ENCODE measurements at regions of chr10 and their contacts with region 1.

Region 1: DNA sequence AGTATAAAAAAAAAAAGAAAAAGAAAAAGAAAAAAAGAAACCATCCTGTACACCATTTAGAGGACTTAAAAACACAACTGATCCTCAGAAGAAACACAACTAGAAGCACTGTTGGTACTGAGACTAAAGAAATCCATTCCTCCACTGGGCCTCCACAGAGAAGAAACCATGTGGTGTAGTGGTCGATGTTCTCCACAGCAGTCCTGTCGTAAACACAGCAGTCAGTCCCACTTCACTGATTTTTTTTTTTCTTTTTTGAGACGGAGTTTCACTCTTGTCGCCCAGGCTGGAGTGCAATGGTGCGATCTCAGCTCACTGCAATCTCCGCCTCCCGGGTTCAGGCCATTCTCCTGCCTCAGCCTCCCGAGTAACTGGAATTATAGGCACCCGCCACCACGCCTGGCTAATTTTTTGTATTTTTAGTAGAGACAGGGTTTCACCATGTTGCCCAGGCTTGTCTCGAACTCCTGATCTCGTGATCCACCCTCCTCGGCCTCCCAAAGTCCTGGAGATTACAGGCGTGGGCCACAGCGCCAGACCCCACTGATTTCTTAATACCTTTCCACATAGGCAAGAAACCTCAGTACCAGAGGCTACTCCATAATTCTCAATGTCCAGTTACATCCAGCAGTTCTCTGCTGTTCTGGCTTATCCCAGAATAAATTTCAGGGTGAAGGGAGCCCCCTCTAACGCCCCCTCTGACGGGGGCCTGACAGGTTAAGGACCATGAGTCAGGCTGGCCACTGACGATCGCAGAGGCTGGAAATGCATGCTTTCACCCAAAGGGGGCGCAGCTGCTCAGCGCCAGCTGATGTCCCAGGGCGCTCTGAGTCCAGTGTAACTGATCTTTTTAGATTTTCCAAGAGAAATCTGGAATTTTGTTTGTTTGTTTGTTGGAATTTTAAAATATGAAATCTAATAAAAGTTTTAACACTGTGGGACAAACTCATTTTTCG is 24.8 kb upstream of the FFAR4 start:
- DNase-seq: peak; percentile 69
- H3K4me3 ChIP-seq: peak overlapping the region in 1 of 3 experiments; percentile 7
- H3K27ac ChIP-seq: no peak overlapping the region
- H3K4me1 ChIP-seq: peaks cover 5% of the 10 kb centered on the region
- H3K27me3 ChIP-seq: peaks cover 0 to 2% of the 10 kb centered on the region in 2 experiments
- CTCF ChIP-seq: peak; percentile 89 to 97
- POLR2A ChIP-seq: no peak

Region 2: DNA sequence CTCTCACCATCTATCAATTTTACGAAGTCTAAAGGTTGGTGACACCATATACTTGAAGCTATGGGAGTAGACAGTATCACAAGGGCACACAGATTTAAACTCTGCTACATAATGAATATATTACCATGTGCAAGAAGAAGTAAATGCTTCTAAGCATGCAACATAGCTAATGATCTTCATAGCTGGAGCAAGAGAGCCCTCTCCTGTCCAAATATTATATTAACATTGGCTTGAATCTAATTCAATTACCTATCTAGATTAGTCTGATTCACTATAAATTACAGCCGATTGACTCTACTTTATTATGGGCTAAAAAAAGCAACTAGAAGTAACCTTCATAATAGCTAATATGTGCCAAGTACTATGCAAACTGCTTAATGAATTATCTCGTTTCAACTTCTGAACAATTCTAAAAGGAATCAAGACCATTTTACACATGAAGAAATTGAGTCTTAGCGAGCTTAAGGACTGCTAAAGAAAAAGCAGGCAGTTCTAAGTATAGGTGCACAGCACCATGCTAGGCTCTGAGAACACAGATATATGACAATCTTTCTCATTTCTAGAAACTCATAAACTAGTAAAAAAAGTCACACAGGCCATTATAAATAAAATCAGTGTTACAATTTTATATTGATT is 138.8 kb after region 1 on chr10:
- CTCF ChIA-PET with region 1: interaction called, 30 read pairs
- POLR2A ChIA-PET with region 1: no interaction called
- dilution Hi-C with region 1: no loop called
- intact Hi-C with region 1: no loop called
- DNase-seq: peak; percentile 77
- H3K4me3 ChIP-seq: no peak overlapping the region
- H3K27ac ChIP-seq: no peak overlapping the region
- H3K4me1 ChIP-seq: no peaks in the 10 kb centered on the region
- H3K27me3 ChIP-seq: no peaks in the 10 kb centered on the region
- CTCF ChIP-seq: peak; percentile 12 to 17
- POLR2A ChIP-seq: no peak

Measured in endothelial cell of umbilical vein (primary cell).